ENCODE measurements at regions of chr1 and their contacts with region 1.

Region 1: GRCh38 chr1:151994956-151995355 is 1.3 kb upstream of the S100A10 start:
- DNase-seq: no peak
- H3K4me3 ChIP-seq: no peak overlapping the region
- H3K27ac ChIP-seq: peak overlapping the region; percentile 80 to 100 (median 98)
- H3K4me1 ChIP-seq: peaks cover 29 to 89% (median 35%) of the 10 kb centered on the region in 3 donors
- H3K27me3 ChIP-seq: no peaks in the 10 kb centered on the region
- CTCF ChIP-seq: no peak
- POLR2A ChIP-seq: no peak

Region 2: GRCh38 chr1:151935154-151935553 is 59.8 kb before region 1 on chr1:
- intact Hi-C with region 1: loop called (anchors 5 kb)
- DNase-seq: no peak
- H3K4me3 ChIP-seq: no peak overlapping the region
- H3K27ac ChIP-seq: no peak overlapping the region
- H3K4me1 ChIP-seq: peaks cover 0 to 4% (median 0%) of the 10 kb centered on the region in 3 donors
- H3K27me3 ChIP-seq: no peaks in the 10 kb centered on the region
- CTCF ChIP-seq: no peak
- POLR2A ChIP-seq: no peak

Region 3: DNA sequence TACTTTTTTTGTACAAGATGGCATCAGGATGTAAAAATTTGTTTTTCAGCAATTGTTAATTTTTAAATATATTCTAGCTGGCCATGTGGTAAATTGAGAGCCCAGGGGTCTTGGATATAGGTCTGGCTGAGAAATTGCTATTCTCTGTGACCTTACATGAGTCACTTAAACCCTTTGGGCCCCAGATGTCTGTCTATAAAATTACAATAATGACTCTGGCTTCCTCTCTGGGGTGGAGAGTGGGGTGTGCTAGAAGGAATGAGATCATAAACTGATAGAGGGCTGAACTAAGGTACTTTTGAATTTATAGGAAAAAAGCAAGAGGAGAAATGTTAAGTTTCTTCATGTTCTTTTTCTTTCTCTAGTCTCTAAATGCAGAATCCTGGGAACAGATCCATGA is 132.7 kb after region 1 on chr1:
- intact Hi-C with region 1: no loop called
- DNase-seq: no peak
- H3K4me3 ChIP-seq: no peak overlapping the region
- H3K27ac ChIP-seq: no peak overlapping the region
- H3K4me1 ChIP-seq: no peaks in the 10 kb centered on the region
- H3K27me3 ChIP-seq: peaks cover 0 to 72% (median 0%) of the 10 kb centered on the region in 4 donors
- CTCF ChIP-seq: no peak
- POLR2A ChIP-seq: no peak

Measured in esophagus squamous epithelium (tissue), 5 donors.